PC-9 (cell line): ENCODE measurements at regions of chr9 and their contacts with region 1.

Region 1: DNA sequence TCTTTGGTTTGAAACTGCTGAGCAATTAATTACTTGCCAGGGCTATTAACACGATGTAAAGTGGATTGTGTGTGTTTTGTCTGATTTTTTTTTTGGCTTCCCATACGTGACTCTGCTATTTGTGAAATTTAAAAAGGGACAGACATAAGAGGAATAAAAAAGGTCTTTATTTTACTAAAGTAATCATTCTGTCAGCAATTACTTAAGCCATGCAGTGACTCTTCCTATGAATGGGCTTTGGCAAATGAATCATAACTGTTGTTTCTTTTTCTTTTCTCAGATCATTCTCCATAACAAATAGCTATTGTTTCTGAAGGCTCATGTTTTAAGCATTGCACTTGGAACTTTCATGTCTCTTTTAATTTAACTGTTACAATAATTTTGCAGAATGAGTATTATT is 461.3 kb upstream of the RORB start:
- DNase-seq: no peak
- H3K4me3 ChIP-seq: no peak overlapping the region
- H3K27ac ChIP-seq: no peak overlapping the region
- H3K4me1 ChIP-seq: no peaks in the 10 kb centered on the region
- H3K27me3 ChIP-seq: no peaks in the 10 kb centered on the region
- CTCF ChIP-seq: no peak

Region 2: DNA sequence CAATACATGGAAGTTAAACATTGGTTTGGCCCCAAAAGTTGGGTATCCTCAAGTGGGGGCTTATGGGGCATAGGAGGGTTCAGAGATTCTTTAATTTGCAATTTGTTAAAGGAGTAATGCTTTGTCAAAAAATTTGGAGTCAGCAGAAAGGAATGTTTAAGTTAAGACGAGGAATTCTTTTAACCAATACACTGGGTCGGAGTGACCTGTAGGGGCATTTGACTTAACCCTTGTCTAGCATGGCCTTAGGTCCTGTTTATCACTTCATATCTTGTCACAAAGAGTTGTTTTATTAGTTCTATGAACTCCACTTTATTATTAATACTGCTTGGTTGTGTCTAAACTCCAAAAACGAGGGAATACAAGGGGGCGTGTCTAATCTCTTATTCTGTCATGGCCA is 194.8 kb before region 1 on chr9:
- CTCF ChIA-PET with region 1: no interaction called
- POLR2A ChIA-PET with region 1: interaction called, 10 read pairs
- intact Hi-C with region 1: no loop called
- DNase-seq: no peak
- H3K4me3 ChIP-seq: no peak overlapping the region
- H3K27ac ChIP-seq: no peak overlapping the region
- H3K4me1 ChIP-seq: no peaks in the 10 kb centered on the region
- H3K27me3 ChIP-seq: no peaks in the 10 kb centered on the region
- CTCF ChIP-seq: no peak